ENCODE measurements at regions of chr1 and their contacts with region 1.

Region 1: GRCh38 chr1:27044613-27045151 is 32.0 kb upstream of the TENT5B start:
- DNase-seq: peak; percentile 97
- H3K4me3 Mint-ChIP-seq: peak overlapping the region; percentile 77
- H3K27ac Mint-ChIP-seq: peak overlapping the region; percentile 86
- H3K4me1 Mint-ChIP-seq: peaks cover 18% of the 10 kb centered on the region
- H3K27me3 Mint-ChIP-seq: no peaks in the 10 kb centered on the region

Region 2: GRCh38 chr1:26999440-26999987 is 45.2 kb before region 1 on chr1:
- intact Hi-C with region 1: loop called (anchors 5 kb)
- DNase-seq: no peak
- H3K4me3 Mint-ChIP-seq: no peak overlapping the region
- H3K27ac Mint-ChIP-seq: no peak overlapping the region
- H3K4me1 Mint-ChIP-seq: peaks cover 8% of the 10 kb centered on the region
- H3K27me3 Mint-ChIP-seq: peaks cover 35% of the 10 kb centered on the region

Region 3: DNA sequence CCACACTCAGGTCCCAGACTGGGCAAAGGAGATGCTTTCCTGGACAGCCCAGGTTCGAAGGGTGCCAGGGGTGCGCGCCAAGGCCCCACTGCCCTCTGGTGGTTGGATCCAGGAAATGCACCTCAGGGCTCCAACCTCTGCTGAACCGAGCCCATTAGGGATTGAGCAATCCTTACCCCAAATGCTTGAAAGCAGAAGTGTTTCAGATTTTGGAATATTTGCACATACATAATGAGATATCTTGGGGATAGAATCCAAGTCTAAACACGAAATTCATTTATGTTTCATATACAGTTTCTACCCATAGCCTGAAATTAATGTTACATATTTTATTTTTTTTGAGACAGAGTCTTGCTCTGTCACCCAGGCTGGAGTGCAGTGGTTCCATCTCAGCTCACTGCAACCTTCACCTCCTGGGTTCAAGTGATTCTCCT is 52.8 kb after region 1 on chr1:
- intact Hi-C with region 1: loop called (anchors 1 kb)
- DNase-seq: peak; percentile 94
- H3K4me3 Mint-ChIP-seq: no peak overlapping the region
- H3K27ac Mint-ChIP-seq: no peak overlapping the region
- H3K4me1 Mint-ChIP-seq: peaks cover 14% of the 10 kb centered on the region
- H3K27me3 Mint-ChIP-seq: no peaks in the 10 kb centered on the region

Region 4: GRCh38 chr1:27284425-27285273 is 240.0 kb after region 1 on chr1:
- intact Hi-C with region 1: loop called (anchors 1 kb)
- DNase-seq: peak; percentile 96
- H3K4me3 Mint-ChIP-seq: no peak overlapping the region
- H3K27ac Mint-ChIP-seq: no peak overlapping the region
- H3K4me1 Mint-ChIP-seq: peaks cover 8% of the 10 kb centered on the region
- H3K27me3 Mint-ChIP-seq: no peaks in the 10 kb centered on the region

Measured in activated CD4-positive, alpha-beta T cell treated with anti-CD3 and anti-CD28 coated beads, Interleukin-2, amount 10 ng/mL, durations not matched to agents 24 days and 14 days (primary cell).